ENCODE measurements at regions of chr9 and their contacts with region 1.

Region 1: DNA sequence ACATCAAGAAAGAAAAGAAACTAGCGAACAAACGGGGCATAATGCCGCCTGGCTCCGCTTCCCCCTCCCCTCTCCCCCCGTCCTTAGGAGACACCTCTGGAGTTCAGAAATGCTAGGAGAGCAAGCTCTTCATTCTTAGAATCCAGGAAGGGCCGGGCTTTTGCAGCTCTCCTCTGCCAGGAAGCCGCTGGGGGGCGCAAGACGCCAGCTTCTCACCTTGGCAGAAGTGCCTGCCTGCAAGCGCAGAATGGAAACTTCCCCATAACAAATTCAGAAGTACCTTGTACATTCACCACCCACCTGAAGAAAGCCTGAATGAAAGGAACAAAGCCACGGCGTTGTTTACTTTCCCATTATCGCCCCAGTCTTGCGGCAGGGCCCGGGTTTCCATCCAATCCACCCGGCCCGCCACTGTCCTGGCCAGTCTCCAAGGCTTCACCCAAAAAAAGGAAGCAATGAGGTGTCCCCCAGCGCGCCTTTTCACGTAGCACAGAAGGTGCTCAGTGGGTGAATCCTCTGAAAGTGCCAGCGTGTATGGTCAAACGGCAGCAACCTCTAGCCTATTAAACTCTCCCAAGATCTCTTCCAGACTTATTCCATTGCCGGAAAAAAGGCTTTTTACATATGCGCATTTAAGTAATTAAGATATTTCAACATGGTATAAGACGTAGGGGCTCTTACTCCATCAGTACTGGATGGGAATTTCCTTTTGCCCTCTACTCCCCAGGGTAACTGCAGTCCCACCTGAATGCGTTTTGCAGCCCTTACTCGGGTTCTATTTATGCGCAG is 1.6 kb upstream of the GADD45G start:
- DNase-seq: peak; percentile 95
- ATAC-seq: peak; percentile 26

Region 2: DNA sequence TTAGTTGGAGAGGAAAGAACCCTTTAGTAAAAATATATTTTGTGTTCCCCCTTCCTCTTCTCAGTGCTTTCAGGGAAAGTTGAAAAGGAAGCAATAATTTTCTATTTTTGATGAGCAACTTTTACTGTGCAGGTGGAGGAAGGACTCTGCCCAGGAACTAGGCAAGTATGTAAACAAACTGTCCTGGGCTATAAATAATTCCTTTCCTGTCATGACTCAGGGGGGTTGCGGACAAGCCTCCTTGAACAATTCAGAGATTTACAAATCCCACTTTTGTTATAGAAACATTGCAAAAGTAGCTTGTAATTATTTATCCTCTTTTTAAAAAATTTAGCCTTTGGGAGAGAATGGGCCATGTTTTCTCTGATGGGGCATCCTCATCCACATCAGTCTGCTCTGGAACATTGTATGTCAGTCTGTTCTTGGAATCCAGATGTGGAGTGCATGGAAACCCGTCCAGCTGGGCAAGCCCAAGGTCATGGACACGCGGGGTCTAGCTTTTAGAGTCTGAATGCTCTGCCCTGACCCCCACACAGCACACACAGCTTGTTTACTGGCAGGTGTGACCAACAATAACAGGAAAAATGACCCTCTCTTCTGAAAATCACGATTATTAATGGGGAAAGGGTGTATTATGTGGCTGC is 129.2 kb after region 1 on chr9:
- intact Hi-C with region 1: loop called (anchors 2 kb)
- DNase-seq: no peak
- ATAC-seq: peak; percentile 50

Region 3: DNA sequence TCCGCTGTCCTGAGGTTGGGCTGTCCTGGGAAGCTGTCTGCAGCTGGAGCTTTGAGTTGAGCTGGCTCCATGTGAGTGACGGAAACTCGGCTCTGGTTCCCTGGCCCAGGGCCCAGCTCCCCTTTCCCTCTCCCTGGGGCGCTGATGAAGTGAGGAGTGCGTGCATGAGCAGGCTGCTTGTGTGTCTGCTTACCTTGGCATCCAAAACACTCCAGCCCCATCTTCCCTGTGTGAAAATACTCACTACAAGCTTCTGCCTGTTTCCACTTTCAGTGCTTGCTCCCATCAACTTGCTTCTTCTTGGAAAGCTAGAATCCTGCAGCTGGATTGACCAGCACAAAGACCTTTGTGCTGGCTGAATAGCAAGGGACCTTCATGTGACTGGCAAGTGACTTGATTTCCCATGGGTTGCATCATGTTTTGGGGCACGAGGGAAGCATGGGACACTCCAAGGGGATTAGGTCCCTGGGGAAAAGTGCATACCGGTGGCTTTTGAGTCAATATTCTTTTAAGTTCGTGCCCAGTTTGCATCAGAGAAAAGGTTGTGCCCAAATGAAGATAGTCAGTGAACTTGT is 199.7 kb after region 1 on chr9:
- intact Hi-C with region 1: loop called (anchors 5 kb)
- DNase-seq: peak; percentile 86
- ATAC-seq: peak; percentile 94

Region 4: DNA sequence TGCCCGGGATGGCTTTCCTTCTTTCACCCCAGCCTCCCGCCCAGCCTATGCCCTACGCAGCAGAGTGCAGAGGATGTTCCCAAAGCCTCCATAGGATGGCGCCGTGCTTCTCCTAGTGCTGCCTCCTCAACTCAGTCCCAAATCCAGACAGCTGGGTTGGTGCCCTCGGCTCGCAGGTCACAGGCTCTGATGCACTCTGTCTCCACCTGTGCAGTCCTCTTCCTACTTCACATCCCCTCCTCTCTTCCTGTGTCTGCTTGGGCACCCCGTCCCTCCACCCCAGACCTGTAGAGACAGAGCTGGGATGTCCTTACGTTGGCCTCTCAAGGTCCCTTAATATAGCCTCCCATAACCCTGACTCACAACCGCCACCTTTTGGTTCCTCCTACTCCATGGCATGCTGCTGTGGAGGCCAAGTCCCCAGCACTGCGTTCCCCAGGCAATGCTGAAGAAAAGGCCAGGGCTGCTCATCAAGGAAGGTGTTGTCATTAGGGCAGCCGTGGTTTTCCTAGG is 316.1 kb after region 1 on chr9:
- intact Hi-C with region 1: loop called (anchors 1 kb)
- DNase-seq: no peak
- ATAC-seq: peak; percentile 91

Region 5: DNA sequence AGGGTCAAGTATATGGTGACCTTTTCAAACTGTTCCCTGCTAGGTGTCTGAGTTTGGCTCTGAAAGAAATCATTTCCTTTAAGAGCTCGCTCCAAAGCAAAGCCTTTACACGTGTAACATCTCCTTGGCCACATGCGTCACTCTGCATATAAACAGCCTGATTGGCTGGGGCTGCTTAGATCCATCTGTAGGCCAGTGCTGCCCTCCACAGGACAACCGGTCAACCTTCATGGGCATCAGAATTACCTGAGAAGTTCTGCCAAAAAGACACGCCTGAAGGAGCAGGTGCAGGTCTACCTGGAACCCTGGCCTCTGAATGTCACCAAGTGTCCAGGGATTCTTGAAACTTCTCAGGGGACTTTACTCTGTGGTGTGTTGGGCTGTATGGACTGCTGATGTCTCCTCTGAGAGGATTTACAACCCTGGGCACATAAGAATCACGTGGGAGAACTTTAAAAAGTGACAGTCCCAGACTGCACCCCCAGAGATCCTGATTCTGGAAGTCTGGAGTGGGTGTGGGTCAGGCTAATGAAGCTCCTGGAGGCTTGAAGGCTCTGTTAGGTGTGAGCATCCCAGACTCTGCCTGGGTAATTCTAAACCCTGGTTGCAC is 499.2 kb after region 1 on chr9:
- intact Hi-C with region 1: loop called (anchors 1 kb)
- DNase-seq: peak; percentile 80
- ATAC-seq: peak; percentile 83